Pancreas (tissue), 10 donors: ENCODE measurements at regions of chr3 and their contacts with region 1.

Region 1: DNA sequence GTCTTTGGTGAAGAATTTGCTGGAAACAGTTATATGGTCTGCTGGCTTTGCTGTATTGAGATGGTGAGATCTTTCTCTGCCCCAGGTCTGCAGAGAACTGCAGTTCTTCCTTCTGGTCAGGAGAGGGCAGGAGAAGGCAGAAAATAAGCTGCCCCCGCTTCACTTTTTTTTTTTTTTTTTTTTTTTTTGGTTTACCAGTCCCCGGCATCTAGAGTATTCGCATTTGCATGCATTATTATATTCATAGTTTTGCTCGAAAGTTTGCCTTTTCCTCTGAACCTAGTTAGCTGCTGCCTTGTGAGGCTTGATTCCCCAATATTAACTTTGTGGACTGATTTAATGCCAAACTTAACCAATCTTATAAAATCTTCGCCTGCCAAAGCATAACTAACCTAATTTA is 10.6 kb upstream of the PARL start:
- DNase-seq: peak in 2 of 6 donors; percentile 22 to 50
- ATAC-seq: peak; percentile 73 to 97 (median 94)
- H3K4me3 ChIP-seq: no peak overlapping the region
- H3K27ac ChIP-seq: no peak overlapping the region
- H3K4me1 ChIP-seq: no peaks in the 10 kb centered on the region
- H3K27me3 ChIP-seq: no peaks in the 10 kb centered on the region
- CTCF ChIP-seq: peak; percentile 56 to 70 (median 60)

Region 2: GRCh38 chr3:183975981-183976662 is 80.8 kb after region 1 on chr3:
- intact Hi-C with region 1: no loop called
- DNase-seq: no peak
- ATAC-seq: peak in 1 of 4 donors; percentile 44
- H3K4me3 ChIP-seq: no peak overlapping the region
- H3K27ac ChIP-seq: no peak overlapping the region
- H3K4me1 ChIP-seq: no peaks in the 10 kb centered on the region
- H3K27me3 ChIP-seq: no peaks in the 10 kb centered on the region
- CTCF ChIP-seq: no peak

Region 3: GRCh38 chr3:184017672-184018423 is 122.6 kb after region 1 on chr3 and contains the start of gene ABCC5:
- intact Hi-C with region 1: loop called in 1 of 3 experiments (anchors 5 kb)
- DNase-seq: peak; percentile 90 to 97 (median 91)
- ATAC-seq: peak; percentile 98 to 99 (median 99)
- H3K4me3 ChIP-seq: peak within 1 kb of the TSS; percentile 91 to 100 (median 100)
- H3K27ac ChIP-seq: peak within 1 kb of the TSS; percentile 20 to 74 (median 50)
- H3K4me1 ChIP-seq: no peaks in the 10 kb centered on the region
- H3K27me3 ChIP-seq: no peaks in the 10 kb centered on the region
- CTCF ChIP-seq: peak in 3 of 4 donors; percentile 4 to 49 (median 41)
- total RNA-seq, gene ABCC5: 2.8 to 25.2 (median 7.1) TPM

Region 4: DNA sequence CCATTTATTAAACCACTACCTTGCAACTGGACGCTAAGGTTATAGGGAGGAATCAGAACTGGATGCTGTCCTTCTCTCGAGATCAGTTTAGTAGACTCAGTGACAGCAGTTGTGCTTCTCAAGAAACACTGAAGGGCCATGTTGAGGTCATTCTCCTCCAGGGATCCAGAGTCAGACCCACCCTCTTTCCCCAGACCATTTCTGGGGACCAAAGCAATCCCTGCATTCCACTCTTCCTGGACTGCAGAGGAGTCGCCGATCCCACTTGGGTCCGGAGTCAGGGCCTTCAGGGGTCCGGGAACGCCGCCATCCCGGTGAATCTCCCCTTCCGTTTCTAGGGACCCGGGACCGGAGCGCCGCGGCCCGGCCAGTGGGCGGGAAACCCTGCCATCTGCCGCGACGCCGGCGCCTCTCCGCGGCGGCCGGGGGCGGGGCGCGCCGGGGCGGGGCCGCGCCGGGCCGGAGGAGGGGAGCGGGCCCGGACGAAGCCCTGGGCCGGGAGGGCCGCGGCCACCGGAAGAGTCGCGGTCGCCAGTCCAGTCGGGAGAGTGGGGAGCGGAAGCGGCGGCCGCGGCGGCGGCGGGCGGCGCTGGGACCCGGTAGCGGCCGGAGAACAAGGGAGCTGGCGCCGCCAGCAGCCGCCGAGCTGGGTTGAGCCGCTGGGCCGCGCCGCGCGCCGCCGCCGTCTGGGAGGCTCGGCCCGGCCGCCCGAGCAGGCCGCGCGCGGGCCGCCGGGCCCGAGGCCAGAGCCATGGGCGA is 259.8 kb after region 1 on chr3 and contains the start of gene DVL3:
- intact Hi-C with region 1: no loop called
- DNase-seq: peak; percentile 68 to 86 (median 74)
- ATAC-seq: peak; percentile 88 to 92 (median 90)
- H3K4me3 ChIP-seq: peak within 1 kb of the TSS; percentile 57 to 93 (median 90)
- H3K27ac ChIP-seq: peak within 1 kb of the TSS; percentile 61 to 71 (median 66)
- H3K4me1 ChIP-seq: peaks cover 5 to 11% (median 11%) of the 10 kb centered on the region in 3 donors
- H3K27me3 ChIP-seq: no peaks in the 10 kb centered on the region
- CTCF ChIP-seq: no peak
- total RNA-seq, gene DVL3: 31.0 to 44.9 (median 35.1) TPM